RWPE1 (cell line): ENCODE measurements at regions of chr2 and their contacts with region 1.

Region 1: DNA sequence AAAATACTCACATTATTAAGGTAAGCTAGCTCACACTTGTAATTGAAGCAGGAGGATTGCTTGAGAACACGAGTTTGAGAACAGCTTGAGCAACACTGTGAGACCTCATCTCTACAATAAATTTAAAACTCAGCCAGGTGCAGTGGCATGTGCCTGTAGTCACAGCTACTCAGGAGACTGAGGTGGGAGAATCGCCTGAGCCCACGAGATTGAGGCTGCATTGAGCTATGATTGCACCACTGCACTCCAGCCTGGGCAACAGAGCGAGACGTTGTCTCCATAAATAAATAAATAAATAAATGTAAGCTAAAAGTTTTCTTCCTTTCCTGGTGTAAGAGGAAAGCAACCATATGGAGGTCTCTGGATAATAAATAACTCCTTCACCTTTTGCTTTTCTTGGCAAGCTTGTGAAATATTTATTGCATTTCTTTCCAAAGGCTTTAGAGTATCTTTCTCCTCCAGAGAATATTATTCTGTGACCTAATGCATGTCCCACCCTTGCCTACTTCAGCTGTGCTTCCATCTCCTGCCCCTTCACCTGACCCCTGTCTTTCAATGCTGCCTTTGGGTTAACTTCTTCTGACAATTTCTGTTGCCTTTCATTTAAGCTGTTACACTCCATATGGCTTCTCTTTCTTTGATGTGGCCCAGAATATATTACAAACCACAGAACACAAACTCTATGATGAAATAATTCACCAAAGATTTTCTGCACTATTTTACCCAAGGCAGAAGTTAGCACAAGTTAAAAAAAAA is 280.7 kb upstream of the RND3 start:
- DNase-seq: no peak
- H3K27ac ChIP-seq: no peak overlapping the region
- CTCF ChIP-seq: no peak

Region 2: DNA sequence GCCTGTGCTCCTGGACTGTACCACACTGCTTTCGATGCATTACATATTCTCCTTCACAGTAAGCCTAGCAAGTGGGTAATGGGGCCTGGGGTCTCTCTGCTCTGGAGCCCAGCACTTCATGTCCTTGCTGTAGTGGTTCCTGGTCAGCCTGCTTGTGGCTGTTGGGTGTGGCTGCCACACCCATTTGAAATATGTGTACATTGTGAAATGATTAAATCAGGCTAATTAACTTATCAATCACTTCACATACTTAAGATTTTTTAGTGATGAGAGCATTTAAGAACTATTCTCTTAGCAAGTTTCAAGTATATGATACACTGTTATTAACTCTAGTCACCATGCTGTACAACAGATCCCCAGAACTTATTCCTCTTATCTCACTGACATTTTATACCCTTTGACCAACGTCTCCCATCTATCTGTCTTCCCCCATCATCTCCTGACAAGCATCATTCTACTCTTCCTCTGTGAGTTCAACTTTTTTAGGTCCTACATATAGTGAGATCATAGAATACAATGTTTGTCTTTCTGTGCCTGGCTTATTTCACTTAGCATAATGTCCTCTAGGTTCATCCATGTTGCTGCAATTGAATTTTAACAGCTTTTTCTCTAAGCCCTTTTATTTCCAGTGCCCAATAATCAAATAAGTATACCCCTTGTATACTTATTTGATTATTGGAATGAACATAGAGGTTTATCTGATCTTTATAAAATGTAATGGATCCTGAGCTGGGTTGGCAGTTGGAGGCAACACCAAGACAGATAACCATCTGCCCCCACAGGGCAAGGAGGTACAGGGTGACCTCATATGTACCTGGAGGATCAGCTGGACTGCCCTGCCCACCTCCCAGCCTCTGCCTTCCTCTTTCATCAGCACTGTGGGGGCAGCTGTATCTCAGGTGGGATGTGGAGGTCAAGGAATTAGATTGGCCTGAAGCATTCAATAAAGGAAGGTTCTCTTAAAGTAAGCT is 1345.5 kb before region 1 on chr2:
- CTCF ChIA-PET with region 1: no interaction called
- POLR2A ChIA-PET with region 1: no interaction called
- DNase-seq: peak; percentile 63
- H3K27ac ChIP-seq: peak overlapping the region; percentile 83
- CTCF ChIP-seq: no peak

Region 3: GRCh38 chr2:150750720-150751119 is 17.4 kb before region 1 on chr2:
- CTCF ChIA-PET with region 1: no interaction called
- POLR2A ChIA-PET with region 1: interaction called, 10 read pairs
- DNase-seq: no peak
- H3K27ac ChIP-seq: no peak overlapping the region
- CTCF ChIP-seq: no peak